ENCODE measurements at regions of chr18 and their contacts with region 1.

Region 1: GRCh38 chr18:79567481-79568147 is 112.0 kb upstream of the CTDP1 start:
- DNase-seq: peak; percentile 91

Region 2: DNA sequence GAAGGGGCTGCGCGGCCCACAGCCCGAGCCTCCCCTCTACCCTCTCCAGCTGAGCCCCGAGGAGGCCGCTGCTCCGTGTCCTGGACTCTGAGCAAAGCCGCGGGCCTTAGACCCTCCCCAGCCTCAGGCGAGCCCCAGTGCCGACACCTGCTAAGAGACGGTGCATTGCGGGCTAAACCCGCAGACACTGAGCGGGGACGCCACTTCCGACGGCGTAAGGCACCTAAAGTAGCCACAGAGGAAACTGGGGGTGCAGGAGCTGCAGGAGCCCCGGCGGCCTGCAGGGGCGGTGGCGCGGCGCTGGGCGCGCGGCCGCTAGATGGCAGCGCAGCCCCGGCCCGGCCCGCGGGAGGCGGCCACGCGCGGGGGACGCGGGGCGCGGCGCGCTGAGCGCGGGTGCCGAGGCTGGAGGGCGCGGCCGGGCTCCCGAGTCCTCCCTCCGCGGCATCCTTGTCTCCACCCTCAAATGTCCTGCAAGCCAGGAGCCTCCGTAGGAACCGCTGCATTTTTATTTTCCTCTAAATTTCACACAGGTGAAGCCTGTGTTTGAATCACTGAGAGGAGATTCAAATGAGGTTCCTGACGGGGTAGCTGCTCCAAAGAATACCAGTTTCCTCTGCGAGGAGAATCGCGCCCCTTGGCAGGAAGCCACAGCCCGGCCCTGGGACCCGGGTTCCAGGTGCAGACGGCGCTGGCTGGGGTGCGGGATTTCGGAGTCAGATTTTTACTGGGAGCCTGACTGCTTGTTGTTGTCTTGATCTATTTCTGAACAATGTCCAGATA is 1667.5 kb before region 1 on chr18:
- intact Hi-C with region 1: loop called in 1 of 2 experiments (anchors 5 kb)
- DNase-seq: no peak

Region 3: GRCh38 chr18:79625195-79625923 is 57.7 kb after region 1 on chr18:
- intact Hi-C with region 1: loop called in 1 of 2 experiments (anchors 10 kb)
- DNase-seq: peak; percentile 70